AG04450 (cell line): ENCODE measurements at regions of chr1 and their contacts with region 1.

Region 1: DNA sequence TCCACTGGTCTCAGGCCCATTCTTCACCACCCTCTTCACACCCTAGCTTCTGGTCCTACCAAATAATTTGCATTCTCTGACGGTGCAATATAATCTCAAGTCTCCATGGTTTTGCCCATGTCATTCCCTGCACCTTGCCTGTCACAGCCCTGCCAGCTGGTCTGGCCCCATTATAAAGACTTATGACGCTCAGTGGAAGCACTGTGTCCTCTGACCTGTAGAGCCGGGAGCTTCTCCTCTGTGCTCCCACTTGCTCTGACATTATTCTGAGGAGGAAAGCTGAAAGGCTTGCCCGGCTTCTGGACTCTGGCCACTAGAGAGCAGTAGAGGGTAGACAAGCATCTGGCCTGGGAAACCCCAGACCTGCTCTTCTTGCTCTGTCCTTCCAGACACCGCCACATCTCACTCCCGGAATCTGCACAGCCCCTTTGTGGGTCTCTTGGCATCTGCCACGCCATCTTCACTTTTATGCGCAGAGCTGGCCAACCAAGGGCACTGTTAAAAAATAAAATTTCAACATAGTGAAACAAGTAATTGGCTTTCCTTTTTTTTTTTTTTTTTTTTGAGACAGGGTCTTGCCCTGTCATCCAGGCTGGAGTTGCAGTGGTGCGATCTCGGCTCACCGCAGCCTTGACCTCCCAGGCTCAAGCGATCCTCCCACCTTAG is 44.4 kb downstream of the NENF start:
- DNase-seq: peak; percentile 71
- H3K4me3 ChIP-seq: no peak overlapping the region
- H3K27ac ChIP-seq: no peak overlapping the region
- H3K27me3 ChIP-seq: peaks cover 12% of the 10 kb centered on the region
- CTCF ChIP-seq: peak; percentile 97

Region 2: GRCh38 chr1:212463565-212464285 is 13.4 kb before region 1 on chr1:
- CTCF ChIA-PET with region 1: interaction called, 10 read pairs
- POLR2A ChIA-PET with region 1: no interaction called
- DNase-seq: no peak
- H3K4me3 ChIP-seq: no peak overlapping the region
- H3K27ac ChIP-seq: no peak overlapping the region
- H3K27me3 ChIP-seq: peaks cover 11% of the 10 kb centered on the region
- CTCF ChIP-seq: no peak

Region 3: GRCh38 chr1:212498283-212499040 is 21.3 kb after region 1 on chr1:
- CTCF ChIA-PET with region 1: interaction called, 18 read pairs
- POLR2A ChIA-PET with region 1: no interaction called
- DNase-seq: peak; percentile 74
- H3K4me3 ChIP-seq: no peak overlapping the region
- H3K27ac ChIP-seq: peak overlapping the region; percentile 43
- H3K27me3 ChIP-seq: no peaks in the 10 kb centered on the region
- CTCF ChIP-seq: no peak

Region 4: DNA sequence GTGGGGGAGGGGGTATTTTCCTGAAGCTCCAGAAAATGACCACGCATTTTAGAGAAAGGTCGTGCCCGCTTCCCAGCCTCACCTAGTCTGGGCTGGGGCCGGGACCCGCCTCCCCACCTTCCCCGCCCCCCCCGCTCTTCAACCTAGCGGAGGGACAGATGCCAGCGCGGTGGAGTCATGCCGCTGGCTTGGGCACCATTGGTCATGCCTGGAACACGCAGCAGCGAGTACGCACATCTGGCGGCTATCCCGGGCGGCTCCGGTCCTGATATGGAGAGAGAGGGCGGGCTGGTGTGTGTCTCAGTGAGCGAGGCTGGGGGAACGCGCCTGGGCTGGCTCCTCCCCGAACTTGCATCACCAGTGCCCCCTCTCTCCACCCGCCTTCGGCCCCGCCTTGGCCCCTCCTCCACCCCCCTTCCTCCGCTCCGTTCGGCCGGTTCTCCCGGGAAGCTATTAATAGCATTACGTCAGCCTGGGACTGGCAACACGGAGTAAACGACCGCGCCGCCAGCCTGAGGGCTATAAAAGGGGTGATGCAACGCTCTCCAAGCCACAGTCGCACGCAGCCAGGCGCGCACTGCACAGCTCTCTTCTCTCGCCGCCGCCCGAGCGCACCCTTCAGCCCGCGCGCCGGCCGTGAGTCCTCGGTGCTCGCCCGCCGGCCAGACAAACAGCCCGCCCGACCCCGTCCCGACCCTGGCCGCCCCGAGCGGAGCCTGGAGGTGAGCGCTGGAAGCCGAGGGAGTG is 131.2 kb after region 1 on chr1 and contains the start of gene ATF3:
- CTCF ChIA-PET with region 1: interaction called, 10 read pairs
- POLR2A ChIA-PET with region 1: interaction called, 45 read pairs
- DNase-seq: peak; percentile 99
- H3K4me3 ChIP-seq: peak within 1 kb of the TSS; percentile 79
- H3K27ac ChIP-seq: peak within 1 kb of the TSS; percentile 96
- H3K27me3 ChIP-seq: peaks cover 42% of the 10 kb centered on the region
- CTCF ChIP-seq: no peak
- polyA plus RNA-seq, gene ATF3: 5.5 TPM in 2 replicates

Region 5: GRCh38 chr1:212782422-212783154 is 305.4 kb after region 1 on chr1:
- CTCF ChIA-PET with region 1: interaction called, 33 read pairs
- POLR2A ChIA-PET with region 1: no interaction called
- DNase-seq: no peak
- H3K4me3 ChIP-seq: no peak overlapping the region
- H3K27ac ChIP-seq: no peak overlapping the region
- H3K27me3 ChIP-seq: no peaks in the 10 kb centered on the region
- CTCF ChIP-seq: peak; percentile 65